Activated B cell treated with CpG ODN at 0.5 μM for 24 hours (primary cell): ENCODE measurements at regions of chr21 and their contacts with region 1.

Region 1: GRCh38 chr21:36156339-36156814 is 247 bp upstream of the DOP1B start:
- DNase-seq: peak; percentile 100
- ATAC-seq: peak; percentile 91
- H3K4me3 Mint-ChIP-seq: peak overlapping the region; percentile 85
- H3K27ac Mint-ChIP-seq: peak overlapping the region; percentile 77
- H3K4me1 Mint-ChIP-seq: peaks cover 32% of the 10 kb centered on the region
- H3K27me3 Mint-ChIP-seq: no peaks in the 10 kb centered on the region
- CTCF ChIP-seq: no peak

Region 2: GRCh38 chr21:36135391-36136102 is 20.8 kb before region 1 on chr21:
- CTCF ChIA-PET with region 1: interaction called, 6 read pairs
- POLR2A ChIA-PET with region 1: interaction called, 15 read pairs
- intact Hi-C with region 1: loop called (anchors 1 kb)
- DNase-seq: peak; percentile 64
- ATAC-seq: peak; percentile 82
- H3K4me3 Mint-ChIP-seq: peak overlapping the region; percentile 92
- H3K27ac Mint-ChIP-seq: peak overlapping the region; percentile 88
- H3K4me1 Mint-ChIP-seq: peaks cover 33% of the 10 kb centered on the region
- H3K27me3 Mint-ChIP-seq: no peaks in the 10 kb centered on the region
- CTCF ChIP-seq: no peak

Region 3: DNA sequence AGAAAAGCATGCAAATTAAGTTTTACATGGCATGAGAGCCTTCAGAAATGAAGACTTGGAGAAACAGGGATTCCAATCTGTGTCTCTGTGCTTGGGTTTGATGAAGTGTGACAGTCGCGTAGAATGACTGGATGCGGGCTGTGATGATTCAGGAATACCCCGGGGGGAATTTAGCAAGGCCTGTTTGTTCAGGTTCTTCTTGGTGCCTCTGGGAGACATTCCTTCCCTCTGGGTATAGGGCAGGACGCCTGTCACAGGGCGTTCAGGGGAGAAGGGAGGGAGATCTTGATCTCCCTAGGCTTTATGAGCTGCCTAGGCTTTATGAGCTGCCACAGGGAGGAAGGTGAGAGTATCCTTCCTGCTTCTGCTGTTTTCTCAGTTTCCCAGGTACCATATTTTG is 36.8 kb after region 1 on chr21:
- CTCF ChIA-PET with region 1: no interaction called
- POLR2A ChIA-PET with region 1: interaction called, 18 read pairs
- intact Hi-C with region 1: no loop called
- DNase-seq: no peak
- ATAC-seq: no peak
- H3K4me3 Mint-ChIP-seq: no peak overlapping the region
- H3K27ac Mint-ChIP-seq: no peak overlapping the region
- H3K4me1 Mint-ChIP-seq: peaks cover 6% of the 10 kb centered on the region
- H3K27me3 Mint-ChIP-seq: no peaks in the 10 kb centered on the region
- CTCF ChIP-seq: no peak

Region 4: DNA sequence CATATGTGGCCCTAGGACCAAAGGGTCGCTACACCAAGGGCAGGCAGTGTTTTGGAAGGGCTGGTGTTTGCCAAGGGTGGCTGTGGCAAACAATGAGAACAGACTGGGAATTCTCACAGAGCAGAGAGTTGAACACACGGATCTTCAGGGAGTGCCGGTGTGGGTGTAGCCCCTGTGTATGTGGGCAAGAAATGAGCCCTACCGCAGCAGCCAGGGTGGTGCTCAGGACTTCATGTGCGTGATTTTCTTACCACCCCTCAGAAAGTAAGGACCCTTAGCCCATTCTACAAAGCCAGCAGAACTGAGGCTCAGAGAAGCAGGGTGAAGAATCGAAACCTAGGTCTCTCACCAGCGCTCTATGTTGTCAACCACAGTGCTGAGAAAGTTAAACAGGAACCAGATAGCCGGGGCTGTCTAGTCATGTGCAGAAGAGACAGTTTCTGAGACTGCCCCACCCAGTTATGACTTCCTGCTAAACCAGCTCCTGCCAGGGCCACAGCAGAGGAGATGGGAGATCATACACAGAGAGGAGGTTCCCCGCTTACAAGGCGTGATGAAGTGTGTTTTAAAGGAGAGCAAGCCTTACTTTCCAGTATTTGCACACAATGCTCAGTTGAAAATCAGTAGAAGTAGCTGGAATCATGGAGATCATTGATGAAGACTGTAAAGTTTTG is 141.7 kb after region 1 on chr21:
- CTCF ChIA-PET with region 1: no interaction called
- POLR2A ChIA-PET with region 1: interaction called, 6 read pairs
- intact Hi-C with region 1: loop called (anchors 1 kb)
- DNase-seq: peak; percentile 46
- ATAC-seq: peak; percentile 95
- H3K4me3 Mint-ChIP-seq: peak overlapping the region; percentile 78
- H3K27ac Mint-ChIP-seq: peak overlapping the region; percentile 98
- H3K4me1 Mint-ChIP-seq: peaks cover 61% of the 10 kb centered on the region
- H3K27me3 Mint-ChIP-seq: no peaks in the 10 kb centered on the region
- CTCF ChIP-seq: no peak

Region 5: DNA sequence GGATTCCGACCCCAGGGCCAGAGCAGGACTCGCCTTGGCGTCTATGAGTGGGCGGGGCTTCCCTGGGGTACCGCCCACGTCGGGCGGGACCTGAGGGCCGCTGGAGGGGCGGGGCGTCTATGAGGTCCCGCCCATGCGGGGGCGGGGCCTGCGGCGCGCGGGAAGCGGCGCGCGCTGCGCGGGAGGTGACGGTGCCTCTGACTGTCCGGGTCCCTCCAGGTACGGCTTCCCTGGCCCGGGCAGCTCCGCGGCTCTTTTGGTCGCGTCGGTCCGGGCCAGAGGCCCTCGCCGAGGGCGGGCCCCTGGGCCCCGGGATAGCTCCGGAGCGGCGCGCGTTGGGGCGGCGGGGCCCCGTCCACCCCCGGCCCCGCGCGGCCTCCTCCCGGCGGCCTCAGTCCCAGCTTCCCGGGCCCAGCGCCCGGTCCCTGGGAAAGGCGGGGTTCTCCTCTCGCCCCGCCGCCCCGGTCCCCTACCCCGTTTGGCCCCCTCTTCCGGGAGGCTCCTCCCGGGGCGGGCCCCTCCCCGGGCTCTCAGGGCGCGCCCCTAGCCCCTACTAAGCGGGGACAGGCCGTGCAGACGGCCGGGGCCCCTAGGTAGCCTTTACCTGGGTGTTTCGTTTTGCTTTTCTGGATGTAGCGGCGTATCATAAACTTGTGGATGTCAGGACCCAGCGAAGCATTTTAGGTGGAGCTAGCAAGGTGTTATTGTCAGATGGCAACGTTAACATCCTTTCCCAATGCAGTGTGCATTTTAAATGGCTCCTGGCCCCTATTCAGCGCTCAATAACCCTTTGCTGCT is 229.1 kb after region 1 on chr21 and contains the start of gene CHAF1B:
- CTCF ChIA-PET with region 1: no interaction called
- POLR2A ChIA-PET with region 1: no interaction called
- intact Hi-C with region 1: loop called (anchors 1 kb)
- DNase-seq: peak; percentile 88
- ATAC-seq: peak; percentile 97
- H3K4me3 Mint-ChIP-seq: peak within 1 kb of the TSS; percentile 83
- H3K27ac Mint-ChIP-seq: no peak within 1 kb of the TSS
- H3K4me1 Mint-ChIP-seq: peaks cover 6% of the 10 kb centered on the region
- H3K27me3 Mint-ChIP-seq: no peaks in the 10 kb centered on the region
- CTCF ChIP-seq: no peak
- total RNA-seq, gene CHAF1B: 5.6 and 6.2 TPM in 2 replicates